ENCODE measurements at regions of chr4 and their contacts with region 1.

Region 1: DNA sequence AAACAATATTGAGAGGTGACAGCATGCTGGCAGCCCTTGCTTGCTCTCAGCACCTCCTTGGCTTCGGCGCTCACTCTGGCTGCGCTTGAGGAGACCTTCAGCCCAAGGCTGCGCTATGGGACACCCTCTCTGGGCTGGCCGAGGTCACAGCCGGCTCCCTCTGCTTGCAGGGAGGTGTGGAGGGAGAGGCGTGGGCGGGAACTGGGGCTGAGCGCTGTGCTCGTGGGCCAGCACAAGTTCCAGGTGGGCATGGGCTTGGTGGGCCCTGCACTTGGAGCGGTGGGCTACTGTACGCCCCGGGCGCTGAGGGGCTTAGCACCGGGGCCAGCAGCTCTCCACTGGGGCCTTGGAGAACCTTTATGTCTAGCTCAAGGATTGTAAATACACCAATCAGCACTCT is 1613.8 kb upstream of the IGFBP7 start:
- DNase-seq: no peak
- H3K4me3 Mint-ChIP-seq: no peak overlapping the region
- H3K27ac Mint-ChIP-seq: no peak overlapping the region
- H3K4me1 Mint-ChIP-seq: no peaks in the 10 kb centered on the region
- H3K27me3 Mint-ChIP-seq: no peaks in the 10 kb centered on the region

Region 2: GRCh38 chr4:58406762-58407161 is 317.2 kb before region 1 on chr4:
- CTCF ChIA-PET with region 1: no interaction called
- intact Hi-C with region 1: loop called (anchors 5 kb)
- DNase-seq: no peak
- H3K4me3 Mint-ChIP-seq: no peak overlapping the region
- H3K27ac Mint-ChIP-seq: no peak overlapping the region
- H3K4me1 Mint-ChIP-seq: no peaks in the 10 kb centered on the region
- H3K27me3 Mint-ChIP-seq: no peaks in the 10 kb centered on the region

Region 3: DNA sequence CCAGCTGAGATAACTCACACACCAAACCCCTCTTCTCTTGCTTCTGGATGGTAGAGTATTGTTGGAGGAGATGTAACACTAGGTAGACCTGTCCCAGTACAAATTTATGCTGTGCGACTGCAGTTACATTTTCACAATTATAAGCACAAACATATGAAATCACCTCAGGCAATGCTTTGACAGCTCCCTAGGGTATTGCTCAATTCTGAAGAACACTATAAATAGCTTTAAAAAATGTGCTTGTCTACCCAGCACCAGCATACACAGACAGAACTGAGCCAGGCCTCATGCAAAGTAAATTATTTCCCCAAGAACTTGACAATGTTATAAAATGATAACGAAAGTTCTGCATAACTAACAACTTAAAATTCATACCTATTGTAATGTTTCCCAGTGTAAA is 477.0 kb after region 1 on chr4:
- CTCF ChIA-PET with region 1: no interaction called
- intact Hi-C with region 1: no loop called
- DNase-seq: no peak
- H3K4me3 Mint-ChIP-seq: no peak overlapping the region
- H3K27ac Mint-ChIP-seq: no peak overlapping the region
- H3K4me1 Mint-ChIP-seq: no peaks in the 10 kb centered on the region
- H3K27me3 Mint-ChIP-seq: no peaks in the 10 kb centered on the region